MCF 10A (cell line): ENCODE measurements at regions of chr11 and their contacts with region 1.

Region 1: DNA sequence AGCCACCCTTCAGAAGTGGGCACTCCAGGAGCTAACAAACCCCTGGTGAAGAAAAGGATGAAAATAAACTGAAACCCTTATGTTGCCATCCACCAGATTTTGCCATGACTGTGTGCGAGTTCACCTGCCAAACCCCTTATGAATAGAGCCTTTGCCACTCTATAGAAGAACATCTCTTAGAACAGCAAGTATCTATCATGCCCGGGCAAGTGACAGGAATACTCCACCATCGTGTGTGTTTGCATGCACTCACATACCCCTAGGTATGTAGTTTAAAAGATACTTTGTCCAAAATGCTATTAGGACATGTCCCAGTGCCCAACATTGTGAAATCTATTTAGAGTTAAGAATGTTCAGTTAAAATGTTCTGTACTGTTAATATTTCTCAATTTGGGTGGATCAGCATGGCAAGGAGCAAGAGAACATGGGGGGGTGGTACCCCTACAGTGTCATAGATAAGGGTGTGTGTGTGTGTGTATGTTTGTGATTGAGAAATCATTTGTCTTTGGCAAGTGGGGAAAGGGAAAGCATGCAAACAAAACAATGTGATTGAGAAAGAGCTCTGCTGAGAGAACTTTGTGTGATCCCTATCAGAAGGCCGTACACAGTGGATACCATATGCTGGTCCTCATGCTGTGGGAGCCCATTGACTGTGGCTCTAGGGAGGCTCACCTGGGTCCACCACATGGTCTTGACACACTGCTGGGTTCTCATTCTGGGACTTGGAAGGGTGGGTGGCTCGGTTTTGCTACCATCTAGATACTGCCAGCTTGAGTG is 94.9 kb downstream of the ZBTB16 start:
- DNase-seq: peak; percentile 99
- H3K4me3 Mint-ChIP-seq: no peak overlapping the region
- H3K27ac Mint-ChIP-seq: peak overlapping the region; percentile 99
- H3K4me1 Mint-ChIP-seq: peaks cover 80% of the 10 kb centered on the region
- H3K27me3 Mint-ChIP-seq: no peaks in the 10 kb centered on the region
- CTCF ChIP-seq: no peak

Region 2: GRCh38 chr11:113752932-113753331 is 401.5 kb before region 1 on chr11:
- CTCF ChIA-PET with region 1: no interaction called
- POLR2A ChIA-PET with region 1: no interaction called
- intact Hi-C with region 1: no loop called
- DNase-seq: no peak
- H3K4me3 Mint-ChIP-seq: no peak overlapping the region
- H3K27ac Mint-ChIP-seq: no peak overlapping the region
- H3K4me1 Mint-ChIP-seq: no peaks in the 10 kb centered on the region
- H3K27me3 Mint-ChIP-seq: no peaks in the 10 kb centered on the region
- CTCF ChIP-seq: no peak

Region 3: GRCh38 chr11:114080219-114080618 is 74.2 kb before region 1 on chr11:
- CTCF ChIA-PET with region 1: no interaction called
- POLR2A ChIA-PET with region 1: interaction called, 13 read pairs
- intact Hi-C with region 1: no loop called
- DNase-seq: peak; percentile 75
- H3K4me3 Mint-ChIP-seq: peak overlapping the region; percentile 67
- H3K27ac Mint-ChIP-seq: peak overlapping the region; percentile 52
- H3K4me1 Mint-ChIP-seq: peaks cover 78% of the 10 kb centered on the region
- H3K27me3 Mint-ChIP-seq: no peaks in the 10 kb centered on the region
- CTCF ChIP-seq: no peak

Region 4: GRCh38 chr11:114110952-114111947 is 43.2 kb before region 1 on chr11:
- CTCF ChIA-PET with region 1: no interaction called
- POLR2A ChIA-PET with region 1: interaction called, 10 read pairs
- intact Hi-C with region 1: no loop called
- DNase-seq: peak; percentile 56
- H3K4me3 Mint-ChIP-seq: peak overlapping the region; percentile 58
- H3K27ac Mint-ChIP-seq: peak overlapping the region; percentile 88
- H3K4me1 Mint-ChIP-seq: peaks cover 85% of the 10 kb centered on the region
- H3K27me3 Mint-ChIP-seq: no peaks in the 10 kb centered on the region
- CTCF ChIP-seq: no peak

Region 5: GRCh38 chr11:114135737-114136151 is 18.7 kb before region 1 on chr11:
- CTCF ChIA-PET with region 1: interaction called, 3 read pairs
- POLR2A ChIA-PET with region 1: interaction called, 19 read pairs
- intact Hi-C with region 1: no loop called
- DNase-seq: no peak
- H3K4me3 Mint-ChIP-seq: no peak overlapping the region
- H3K27ac Mint-ChIP-seq: peak overlapping the region; percentile 86
- H3K4me1 Mint-ChIP-seq: peaks cover 64% of the 10 kb centered on the region
- H3K27me3 Mint-ChIP-seq: no peaks in the 10 kb centered on the region
- CTCF ChIP-seq: no peak

Region 6: GRCh38 chr11:114166897-114167323 is 12.5 kb after region 1 on chr11:
- CTCF ChIA-PET with region 1: interaction called, 4 read pairs
- POLR2A ChIA-PET with region 1: interaction called, 1,399 read pairs
- intact Hi-C with region 1: no loop called
- DNase-seq: peak; percentile 92
- H3K4me3 Mint-ChIP-seq: peak overlapping the region; percentile 58
- H3K27ac Mint-ChIP-seq: peak overlapping the region; percentile 99
- H3K4me1 Mint-ChIP-seq: peaks cover 87% of the 10 kb centered on the region
- H3K27me3 Mint-ChIP-seq: no peaks in the 10 kb centered on the region
- CTCF ChIP-seq: no peak

Region 7: DNA sequence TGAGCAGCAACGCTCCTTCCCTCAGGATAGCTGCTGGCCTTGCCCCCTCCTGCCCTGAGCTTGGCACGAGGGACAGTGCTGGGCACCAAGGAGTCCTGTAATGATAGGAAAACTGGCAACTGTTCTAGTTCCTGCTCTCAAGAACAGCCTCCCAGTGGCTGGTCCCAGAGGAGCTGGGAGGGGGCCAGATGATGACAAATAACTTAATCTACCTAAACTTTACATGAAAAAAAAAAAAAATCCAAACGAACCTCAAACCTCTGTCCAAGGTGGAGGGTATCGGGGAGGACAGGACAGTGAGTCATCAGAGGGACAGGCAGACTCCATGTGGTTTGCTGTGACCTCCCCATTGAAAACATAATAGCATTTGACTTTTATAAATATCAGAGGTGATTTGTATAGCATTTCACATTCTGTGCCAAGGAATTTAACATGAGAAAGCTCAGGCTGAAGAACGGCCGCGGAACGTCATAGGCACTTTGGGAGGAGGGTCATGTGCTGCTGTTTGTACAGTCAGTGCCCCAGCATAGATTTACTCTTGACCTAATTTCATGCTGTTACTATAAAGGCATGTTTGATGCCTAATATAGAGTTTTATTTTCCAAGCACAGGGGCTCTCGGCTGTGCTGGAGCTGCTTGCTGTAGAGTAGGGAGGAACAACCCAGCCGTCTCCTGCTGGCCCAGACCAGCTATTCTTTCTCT is 43.5 kb after region 1 on chr11:
- CTCF ChIA-PET with region 1: interaction called, 3 read pairs
- POLR2A ChIA-PET with region 1: interaction called, 1,399 read pairs
- intact Hi-C with region 1: no loop called
- DNase-seq: peak; percentile 95
- H3K4me3 Mint-ChIP-seq: peak overlapping the region; percentile 1
- H3K27ac Mint-ChIP-seq: peak overlapping the region; percentile 97
- H3K4me1 Mint-ChIP-seq: peaks cover 66% of the 10 kb centered on the region
- H3K27me3 Mint-ChIP-seq: no peaks in the 10 kb centered on the region
- CTCF ChIP-seq: no peak

Region 8: DNA sequence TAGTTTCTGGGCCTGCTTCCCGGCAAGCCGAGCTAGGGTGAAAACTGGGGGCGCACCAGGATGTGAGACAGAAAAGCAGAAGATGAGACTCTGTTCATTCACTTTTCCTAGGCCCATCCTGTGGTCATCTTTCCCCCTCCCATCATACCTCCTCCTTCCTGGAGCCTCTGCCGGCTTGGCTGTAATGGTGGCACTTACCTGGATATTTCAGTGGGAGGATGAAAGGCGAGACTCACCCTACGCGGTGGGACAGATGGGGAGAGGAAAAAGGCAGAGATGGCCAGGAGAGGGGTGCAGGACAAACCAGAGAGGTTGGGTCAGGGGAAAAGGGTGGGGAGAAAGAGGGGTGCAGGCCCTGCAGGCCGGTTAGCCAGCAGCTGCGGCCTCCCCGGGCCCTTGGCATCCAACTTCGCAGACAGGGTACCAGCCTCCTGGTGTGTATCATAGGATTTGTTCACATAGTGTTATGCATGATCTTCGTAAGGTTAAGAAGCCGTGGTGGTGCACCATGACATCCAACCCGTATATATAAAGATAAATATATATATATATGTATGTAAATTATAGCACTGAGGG is 100.2 kb after region 1 on chr11:
- CTCF ChIA-PET with region 1: no interaction called
- POLR2A ChIA-PET with region 1: no interaction called
- intact Hi-C with region 1: no loop called
- DNase-seq: no peak
- H3K4me3 Mint-ChIP-seq: no peak overlapping the region
- H3K27ac Mint-ChIP-seq: peak overlapping the region; percentile 61
- H3K4me1 Mint-ChIP-seq: peaks cover 31% of the 10 kb centered on the region
- H3K27me3 Mint-ChIP-seq: no peaks in the 10 kb centered on the region
- CTCF ChIP-seq: no peak

Region 9: GRCh38 chr11:114301088-114301487 is 146.6 kb after region 1 on chr11:
- CTCF ChIA-PET with region 1: no interaction called
- POLR2A ChIA-PET with region 1: interaction called, 56 read pairs
- intact Hi-C with region 1: no loop called
- DNase-seq: no peak
- H3K4me3 Mint-ChIP-seq: peak overlapping the region; percentile 78
- H3K27ac Mint-ChIP-seq: peak overlapping the region; percentile 98
- H3K4me1 Mint-ChIP-seq: peaks cover 25% of the 10 kb centered on the region
- H3K27me3 Mint-ChIP-seq: no peaks in the 10 kb centered on the region
- CTCF ChIP-seq: no peak